A549 (cell line): ENCODE measurements at regions of chr17 and their contacts with region 1.

Region 1: GRCh38 chr17:82320956-82321927 is 3.8 kb upstream of the CD7 start:
- DNase-seq: peak in 1 of 2 experiments; percentile 66
- ATAC-seq: peak; percentile 23 to 82; a peak in 3 of 6 replicates
- H3K4me3 ChIP-seq: peak overlapping the region; percentile 32
- H3K27ac ChIP-seq: peak overlapping the region; percentile 60 to 62; a peak in 5 of 6 replicates
- H3K4me1 ChIP-seq: peaks cover 12% of the 10 kb centered on the region; the same call in 2 of the 3 replicates
- CTCF ChIP-seq: peak; percentile 96
- EP300 ChIP-seq: no peak
- POLR2A ChIP-seq: no peak
- RAD21 ChIP-seq: peak; percentile 80 to 97

Region 2: DNA sequence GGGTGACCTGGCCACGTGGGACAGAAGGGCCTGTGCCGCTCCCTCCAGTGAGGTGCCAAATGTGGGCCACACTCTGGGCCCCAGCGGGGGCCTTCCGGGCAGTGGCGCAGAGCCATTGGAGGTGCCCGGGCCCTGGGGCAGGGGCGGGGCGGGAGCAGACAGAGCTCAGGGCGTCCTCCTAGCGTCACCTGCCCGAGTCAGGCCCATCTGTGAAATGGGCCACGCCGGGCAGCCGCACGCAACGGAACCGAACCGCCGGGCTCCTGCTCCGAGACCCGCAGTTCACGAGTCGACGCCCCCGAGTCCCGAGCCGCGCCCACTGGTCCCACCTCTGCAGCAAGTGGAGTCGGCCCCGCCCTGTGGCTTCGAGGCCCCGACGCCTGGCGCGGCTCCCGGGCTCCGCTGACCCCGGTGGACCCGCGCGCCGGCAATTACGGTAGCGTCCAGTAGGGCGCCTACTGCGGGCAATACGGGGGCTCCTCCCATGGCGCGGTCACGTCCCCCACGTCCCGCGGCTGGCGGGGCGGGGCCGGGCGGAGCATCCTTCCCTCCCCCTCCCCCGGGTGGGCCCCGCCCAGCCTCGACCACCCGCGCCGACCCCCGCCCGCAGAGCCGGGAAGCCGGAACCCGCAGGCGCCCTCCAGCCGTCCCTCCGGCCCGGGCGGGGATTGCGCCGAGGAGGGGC is 90.5 kb before region 1 on chr17:
- CTCF ChIA-PET with region 1: interaction called, 289 read pairs
- POLR2A ChIA-PET with region 1: no interaction called
- DNase-seq: peak; percentile 79 to 92
- ATAC-seq: peak; percentile 42 to 73
- H3K4me3 ChIP-seq: peak overlapping the region; percentile 65
- H3K27ac ChIP-seq: peak overlapping the region; percentile 95 to 99
- H3K4me1 ChIP-seq: peaks cover 50% of the 10 kb centered on the region
- CTCF ChIP-seq: 0 out of 3 replicates have a peak, but pooled peaks have one; percentile 12
- EP300 ChIP-seq: no peak
- POLR2A ChIP-seq: no peak; the same call in 1 of the 2 replicates
- RAD21 ChIP-seq: no peak; a peak in 1 of 5 replicates

Region 3: DNA sequence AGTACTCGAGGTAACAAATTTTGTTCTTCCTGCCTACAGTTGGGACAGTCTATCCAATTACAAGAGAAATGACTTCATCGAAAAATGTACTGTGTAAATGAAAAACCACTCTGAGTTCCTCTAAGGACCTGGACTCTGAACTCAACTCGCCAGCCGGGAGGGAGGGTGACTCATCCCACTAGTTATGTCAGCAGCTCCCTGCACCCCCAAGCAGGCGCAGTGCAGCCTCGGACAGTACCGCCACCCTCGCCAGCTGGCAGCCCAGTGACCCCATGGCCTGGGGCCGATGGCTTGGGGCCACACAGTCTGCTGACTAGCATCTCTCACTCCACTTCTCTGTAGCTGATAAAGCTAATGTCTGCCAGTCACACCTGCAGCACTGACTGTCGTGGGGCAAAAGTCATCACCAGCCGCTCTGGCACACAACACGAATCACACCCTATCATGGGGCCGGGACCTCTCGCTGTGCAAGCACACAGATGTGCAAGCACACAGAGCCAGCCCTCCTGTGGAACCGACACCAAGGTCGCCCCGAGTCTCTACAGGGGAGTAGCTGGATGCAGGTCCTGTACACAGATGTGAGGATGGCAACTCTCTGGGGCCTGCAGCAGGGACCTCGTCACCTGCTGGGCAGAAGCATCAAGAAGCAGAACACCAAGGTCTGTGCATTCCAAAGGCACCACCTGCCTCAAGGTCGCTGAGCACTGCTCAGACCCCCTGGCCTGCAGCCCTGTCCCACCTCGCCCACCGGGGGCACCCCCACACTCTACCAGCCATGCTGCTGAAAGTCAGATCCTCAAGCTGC is 53.5 kb before region 1 on chr17:
- CTCF ChIA-PET with region 1: interaction called, 20 read pairs
- POLR2A ChIA-PET with region 1: no interaction called
- DNase-seq: peak; percentile 94 to 97
- ATAC-seq: peak; percentile 93 to 94
- H3K4me3 ChIP-seq: peak overlapping the region; percentile 35
- H3K27ac ChIP-seq: peak overlapping the region; percentile 89 to 91
- H3K4me1 ChIP-seq: peaks cover 68% of the 10 kb centered on the region
- CTCF ChIP-seq: no peak
- EP300 ChIP-seq: peak in 1 of 2 experiments; percentile 54; a peak in 1 of 5 replicates
- POLR2A ChIP-seq: no peak
- RAD21 ChIP-seq: peak; percentile 29 to 43; a peak in 1 of 5 replicates

Region 4: DNA sequence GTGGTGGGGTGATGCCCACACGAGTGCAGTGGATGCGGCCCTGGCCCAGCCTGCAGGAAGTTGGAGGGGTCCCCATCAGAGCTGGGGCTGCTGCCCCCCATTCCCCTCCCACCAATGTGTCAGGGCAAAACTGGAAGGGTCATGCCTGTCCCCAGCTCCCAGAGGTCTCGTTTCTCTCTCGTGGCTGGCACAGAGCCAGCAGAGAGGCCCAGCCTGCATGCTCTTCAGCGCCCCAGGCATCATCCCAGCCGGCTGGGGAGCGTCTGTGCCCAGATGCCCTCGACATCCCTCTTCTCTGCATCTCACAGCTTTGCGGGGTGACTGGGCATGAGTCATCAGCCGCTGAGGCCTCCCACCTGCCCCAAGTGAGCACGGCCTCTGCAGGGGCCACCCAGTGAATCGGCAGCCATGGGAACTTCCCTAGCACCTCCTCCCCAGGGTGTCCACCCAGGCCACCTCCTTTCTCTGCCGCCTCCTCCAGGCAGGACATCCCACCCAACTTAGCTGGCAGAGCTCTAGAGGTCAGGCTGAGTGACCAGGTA is 38.0 kb before region 1 on chr17:
- CTCF ChIA-PET with region 1: interaction called, 20 read pairs
- POLR2A ChIA-PET with region 1: no interaction called
- DNase-seq: peak; percentile 69
- ATAC-seq: peak; percentile 48 to 57
- H3K4me3 ChIP-seq: no peak overlapping the region
- H3K27ac ChIP-seq: peak overlapping the region; percentile 82 to 87
- H3K4me1 ChIP-seq: peaks cover 46% of the 10 kb centered on the region
- CTCF ChIP-seq: no peak
- EP300 ChIP-seq: peak; percentile 21 to 48; a peak in 2 of 5 replicates
- POLR2A ChIP-seq: no peak
- RAD21 ChIP-seq: no peak; a peak in 1 of 5 replicates

Region 5: GRCh38 chr17:82332669-82333278 is 11.5 kb after region 1 on chr17:
- CTCF ChIA-PET with region 1: interaction called, 60 read pairs
- POLR2A ChIA-PET with region 1: no interaction called
- DNase-seq: peak; percentile 58 to 69
- ATAC-seq: peak; percentile 37 to 46
- H3K4me3 ChIP-seq: peak overlapping the region; percentile 66
- H3K27ac ChIP-seq: peak overlapping the region; percentile 89 to 93
- H3K4me1 ChIP-seq: peaks cover 55% of the 10 kb centered on the region
- CTCF ChIP-seq: no peak
- EP300 ChIP-seq: no peak
- POLR2A ChIP-seq: no peak
- RAD21 ChIP-seq: no peak

Region 6: GRCh38 chr17:82338858-82339633 is 17.8 kb after region 1 on chr17:
- CTCF ChIA-PET with region 1: interaction called, 60 read pairs
- POLR2A ChIA-PET with region 1: no interaction called
- DNase-seq: peak; percentile 86 to 94
- ATAC-seq: peak; percentile 81 to 89
- H3K4me3 ChIP-seq: peak overlapping the region; percentile 37
- H3K27ac ChIP-seq: peak overlapping the region; percentile 86 to 92
- H3K4me1 ChIP-seq: peaks cover 42% of the 10 kb centered on the region
- CTCF ChIP-seq: no peak
- EP300 ChIP-seq: no peak
- POLR2A ChIP-seq: peak; percentile 29; the same call in 1 of the 2 replicates
- RAD21 ChIP-seq: no peak; a peak in 1 of 5 replicates

Region 7: GRCh38 chr17:82346342-82347300 is 25.4 kb after region 1 on chr17:
- CTCF ChIA-PET with region 1: interaction called, 29 read pairs
- POLR2A ChIA-PET with region 1: no interaction called
- DNase-seq: no peak
- ATAC-seq: no peak
- H3K4me3 ChIP-seq: no peak overlapping the region
- H3K27ac ChIP-seq: no peak overlapping the region; a peak in 1 of 6 replicates
- H3K4me1 ChIP-seq: peaks cover 15% of the 10 kb centered on the region
- CTCF ChIP-seq: no peak
- EP300 ChIP-seq: no peak
- POLR2A ChIP-seq: no peak
- RAD21 ChIP-seq: no peak

Region 8: GRCh38 chr17:82388223-82388921 is 67.1 kb after region 1 on chr17:
- CTCF ChIA-PET with region 1: no interaction called
- POLR2A ChIA-PET with region 1: no interaction called
- DNase-seq: peak in 1 of 2 experiments; percentile 41
- ATAC-seq: peak in 1 of 2 experiments; percentile 18; a peak in 3 of 6 replicates
- H3K4me3 ChIP-seq: no peak overlapping the region
- H3K27ac ChIP-seq: no peak overlapping the region
- H3K4me1 ChIP-seq: peaks cover 24% of the 10 kb centered on the region
- CTCF ChIP-seq: no peak
- EP300 ChIP-seq: no peak
- POLR2A ChIP-seq: no peak
- RAD21 ChIP-seq: peak in 1 of 2 experiments; percentile 16; a peak in 1 of 5 replicates